Caco-2 (cell line): ENCODE measurements at regions of chr15 and their contacts with region 1.

Region 1: DNA sequence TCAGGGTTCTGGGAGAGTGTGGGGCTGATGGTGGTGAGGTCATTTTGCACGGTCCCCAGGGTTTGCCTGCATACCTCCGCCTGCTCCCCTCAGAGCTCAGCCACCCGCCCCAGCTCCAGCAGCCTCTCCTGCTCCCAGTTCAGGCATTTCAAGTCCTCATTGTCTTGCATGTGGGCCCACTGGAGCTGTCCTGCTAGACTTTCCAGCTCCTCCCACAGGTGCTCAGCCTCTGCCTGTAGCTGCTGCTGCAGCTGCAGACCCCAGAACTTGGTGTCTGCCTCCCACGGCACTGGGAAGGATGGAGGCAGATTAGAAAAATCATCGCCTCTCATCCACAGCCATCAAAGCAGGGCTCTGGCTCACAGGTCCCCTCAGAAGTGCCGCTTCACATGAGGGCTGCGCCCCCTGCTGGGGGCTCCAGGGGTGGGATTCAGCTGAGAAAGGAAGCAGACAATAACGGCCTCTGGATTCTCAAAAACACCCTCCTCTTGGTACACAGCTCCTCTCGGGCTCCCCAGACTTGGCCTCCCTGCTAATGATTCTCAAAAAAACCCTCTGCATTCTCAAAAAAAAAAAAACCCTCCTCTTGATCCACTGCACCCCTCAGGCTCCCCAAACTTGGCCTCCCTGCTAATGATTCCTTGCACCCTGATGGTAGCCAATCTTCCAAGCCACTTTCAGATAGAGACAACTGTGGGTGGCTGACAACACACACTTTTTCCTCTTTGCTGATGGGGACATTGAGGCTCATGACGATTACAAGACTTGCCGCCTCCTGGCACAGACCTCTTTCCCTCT is 89.3 kb upstream of the C2CD4B start:
- DNase-seq: peak in 1 of 2 experiments; percentile 70
- H3K4me3 ChIP-seq: no peak overlapping the region
- H3K4me3 Mint-ChIP-seq: no peak overlapping the region
- H3K27ac Mint-ChIP-seq: no peak overlapping the region
- H3K4me1 ChIP-seq: no peaks in the 10 kb centered on the region
- H3K4me1 Mint-ChIP-seq: no peaks in the 10 kb centered on the region
- H3K27me3 ChIP-seq: no peaks in the 10 kb centered on the region
- H3K27me3 Mint-ChIP-seq: no peaks in the 10 kb centered on the region
- CTCF ChIP-seq: peak; percentile 66 to 76

Region 2: GRCh38 chr15:62125773-62126172 is 128.6 kb before region 1 on chr15:
- CTCF ChIA-PET with region 1: interaction called, 5 read pairs
- POLR2A ChIA-PET with region 1: no interaction called
- intact Hi-C with region 1: loop called (anchors 1 kb)
- DNase-seq: peak; percentile 38 to 41
- H3K4me3 ChIP-seq: no peak overlapping the region
- H3K4me3 Mint-ChIP-seq: no peak overlapping the region
- H3K27ac Mint-ChIP-seq: no peak overlapping the region
- H3K4me1 ChIP-seq: peaks cover 6% of the 10 kb centered on the region; the same call in 1 of the 2 replicates
- H3K4me1 Mint-ChIP-seq: peaks cover 12% of the 10 kb centered on the region
- H3K27me3 ChIP-seq: no peaks in the 10 kb centered on the region
- H3K27me3 Mint-ChIP-seq: peaks cover 5% of the 10 kb centered on the region
- CTCF ChIP-seq: peak; percentile 31 to 34

Region 3: GRCh38 chr15:62165104-62165792 is 89.1 kb before region 1 on chr15 and contains the start of gene C2CD4B:
- CTCF ChIA-PET with region 1: interaction called, 10 read pairs
- POLR2A ChIA-PET with region 1: no interaction called
- intact Hi-C with region 1: loop called (anchors 5 kb)
- DNase-seq: peak; percentile 72 to 81
- H3K4me3 ChIP-seq: peak within 1 kb of the TSS; percentile 36
- H3K4me3 Mint-ChIP-seq: peak within 1 kb of the TSS; percentile 83
- H3K27ac Mint-ChIP-seq: no peak within 1 kb of the TSS
- H3K4me1 ChIP-seq: no peaks in the 10 kb centered on the region
- H3K4me1 Mint-ChIP-seq: peaks cover 10% of the 10 kb centered on the region
- H3K27me3 ChIP-seq: no peaks in the 10 kb centered on the region; the same call in 1 of the 2 replicates
- H3K27me3 Mint-ChIP-seq: peaks cover 34% of the 10 kb centered on the region
- CTCF ChIP-seq: no peak
- total RNA-seq, gene C2CD4B: 0.46 and 0.50 TPM in 2 replicates

Region 4: GRCh38 chr15:62173215-62173614 is 81.1 kb before region 1 on chr15:
- CTCF ChIA-PET with region 1: no interaction called
- POLR2A ChIA-PET with region 1: no interaction called
- intact Hi-C with region 1: loop called (anchors 5 kb)
- DNase-seq: no peak
- H3K4me3 ChIP-seq: no peak overlapping the region
- H3K4me3 Mint-ChIP-seq: no peak overlapping the region
- H3K27ac Mint-ChIP-seq: no peak overlapping the region
- H3K4me1 ChIP-seq: no peaks in the 10 kb centered on the region
- H3K4me1 Mint-ChIP-seq: no peaks in the 10 kb centered on the region
- H3K27me3 ChIP-seq: no peaks in the 10 kb centered on the region
- H3K27me3 Mint-ChIP-seq: peaks cover 4% of the 10 kb centered on the region
- CTCF ChIP-seq: no peak